Adrenal gland (tissue), 19 donors: ENCODE measurements at regions of chr4 and their contacts with region 1.

Region 1: DNA sequence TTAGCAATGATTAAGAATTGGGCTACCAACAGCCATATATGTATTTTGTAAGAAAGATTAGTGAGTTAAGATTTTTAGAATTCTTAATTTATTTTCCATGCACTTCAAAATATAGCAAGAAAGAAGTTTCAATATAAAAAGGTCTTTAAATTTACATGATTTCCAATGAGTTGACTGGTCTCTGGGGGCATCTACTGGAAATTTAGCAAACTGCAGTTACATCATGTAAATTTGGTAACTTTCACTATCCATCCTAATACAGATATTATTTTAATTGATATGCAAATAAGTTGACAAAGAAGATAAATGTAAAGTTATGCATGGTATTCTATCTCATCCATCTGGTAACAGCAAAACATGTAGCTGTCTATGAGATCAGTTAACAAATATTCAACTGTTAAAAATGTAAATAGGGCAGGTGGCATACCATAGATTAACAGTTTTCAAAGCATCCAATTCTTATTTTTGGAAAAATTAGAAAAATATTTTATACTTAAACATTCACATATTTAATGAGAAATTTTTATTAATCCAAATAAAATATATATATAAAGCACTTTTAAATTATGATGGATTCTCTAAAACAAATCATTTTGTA is 29.1 kb downstream of the TTC29 start:
- DNase-seq: peak in 3 of 7 donors; percentile 28 to 39 (median 30)
- H3K4me3 ChIP-seq: no peak overlapping the region
- H3K27ac ChIP-seq: no peak overlapping the region
- H3K4me1 ChIP-seq: no peaks in the 10 kb centered on the region
- H3K27me3 ChIP-seq: peaks cover 43% of the 10 kb centered on the region
- CTCF ChIP-seq: peak; percentile 60 to 86 (median 76)
- POLR2A ChIP-seq: no peak

Region 2: GRCh38 chr4:145956288-145956890 is 960.2 kb before region 1 on chr4:
- intact Hi-C with region 1: loop called in 1 of 2 experiments (anchors 10 kb)
- DNase-seq: peak; percentile 27 to 65 (median 39)
- H3K4me3 ChIP-seq: no peak overlapping the region
- H3K27ac ChIP-seq: no peak overlapping the region
- H3K4me1 ChIP-seq: peaks cover 0 to 3% of the 10 kb centered on the region in 2 donors
- H3K27me3 ChIP-seq: no peaks in the 10 kb centered on the region
- CTCF ChIP-seq: peak; percentile 52 to 70 (median 62)
- POLR2A ChIP-seq: no peak

Region 3: DNA sequence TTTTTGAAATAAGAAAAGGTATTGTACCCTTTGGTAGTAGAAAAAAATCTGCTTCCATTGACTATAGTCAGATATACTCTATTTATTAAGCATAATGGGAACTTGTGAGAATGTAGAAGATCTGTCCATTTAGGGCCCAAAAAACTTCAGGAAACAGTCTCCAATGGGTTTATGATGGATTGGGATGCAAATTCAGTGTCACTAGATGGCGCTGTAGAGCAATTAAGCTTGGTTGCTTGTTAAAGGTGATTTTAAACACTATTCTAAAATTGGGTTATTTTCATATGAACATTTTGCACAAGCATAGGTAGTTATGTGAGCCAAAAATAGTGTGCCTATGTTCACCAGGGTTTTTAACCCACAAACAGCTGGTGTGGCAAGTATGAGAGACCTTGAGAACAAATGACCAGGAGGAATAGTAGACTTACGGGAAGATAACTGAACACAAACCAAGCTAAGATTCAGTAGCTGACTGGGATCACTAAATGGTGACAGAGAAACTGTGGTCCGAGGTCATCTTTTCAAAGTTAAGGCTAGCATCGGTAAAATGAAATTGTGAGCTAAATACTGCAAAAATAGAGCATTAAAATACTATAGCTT is 821.4 kb before region 1 on chr4:
- intact Hi-C with region 1: loop called in 1 of 2 experiments (anchors 10 kb)
- DNase-seq: peak in 4 of 7 donors; percentile 27 to 64 (median 48)
- H3K4me3 ChIP-seq: no peak overlapping the region
- H3K27ac ChIP-seq: no peak overlapping the region
- H3K4me1 ChIP-seq: no peaks in the 10 kb centered on the region
- H3K27me3 ChIP-seq: no peaks in the 10 kb centered on the region
- CTCF ChIP-seq: peak in 5 of 6 experiments; percentile 54 to 75 (median 64)
- POLR2A ChIP-seq: no peak

Region 4: DNA sequence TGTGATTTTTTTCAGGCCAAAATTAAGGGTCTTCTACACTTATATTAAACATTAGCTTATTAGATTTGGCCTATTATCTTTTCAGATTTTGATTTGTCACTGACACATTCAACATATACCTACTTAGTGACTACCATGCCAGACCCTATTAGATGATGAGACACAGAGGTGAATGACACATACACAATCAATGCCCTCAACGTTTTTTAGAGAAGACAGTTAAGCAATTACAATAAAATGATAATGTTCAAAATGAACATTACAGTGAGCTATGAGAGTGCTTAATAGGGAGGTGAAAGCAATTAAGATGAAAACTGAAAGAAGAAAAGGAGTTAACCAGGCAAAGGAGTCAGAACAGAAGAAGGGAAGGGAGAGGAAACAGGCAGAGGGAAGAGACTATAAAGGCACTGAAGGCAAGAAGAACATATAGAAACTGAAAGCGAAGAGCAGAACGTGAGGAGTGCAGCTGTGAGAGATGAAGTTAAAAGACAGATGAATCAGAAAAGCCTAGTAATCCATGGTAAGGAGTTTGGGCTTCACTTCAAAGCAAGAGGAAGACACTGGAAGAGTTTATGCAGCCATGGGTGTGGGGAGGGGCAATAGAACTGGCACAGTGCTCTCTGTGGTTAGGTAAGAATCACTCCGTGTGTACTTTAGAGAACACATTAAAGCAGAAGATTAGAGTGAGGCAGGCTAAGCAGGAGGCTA is 583.2 kb before region 1 on chr4:
- intact Hi-C with region 1: loop called in 1 of 2 experiments (anchors 10 kb)
- DNase-seq: no peak
- H3K4me3 ChIP-seq: no peak overlapping the region
- H3K27ac ChIP-seq: no peak overlapping the region
- H3K4me1 ChIP-seq: peaks cover 0 to 21% of the 10 kb centered on the region in 2 donors
- H3K27me3 ChIP-seq: no peaks in the 10 kb centered on the region
- CTCF ChIP-seq: no peak
- POLR2A ChIP-seq: no peak

Region 5: DNA sequence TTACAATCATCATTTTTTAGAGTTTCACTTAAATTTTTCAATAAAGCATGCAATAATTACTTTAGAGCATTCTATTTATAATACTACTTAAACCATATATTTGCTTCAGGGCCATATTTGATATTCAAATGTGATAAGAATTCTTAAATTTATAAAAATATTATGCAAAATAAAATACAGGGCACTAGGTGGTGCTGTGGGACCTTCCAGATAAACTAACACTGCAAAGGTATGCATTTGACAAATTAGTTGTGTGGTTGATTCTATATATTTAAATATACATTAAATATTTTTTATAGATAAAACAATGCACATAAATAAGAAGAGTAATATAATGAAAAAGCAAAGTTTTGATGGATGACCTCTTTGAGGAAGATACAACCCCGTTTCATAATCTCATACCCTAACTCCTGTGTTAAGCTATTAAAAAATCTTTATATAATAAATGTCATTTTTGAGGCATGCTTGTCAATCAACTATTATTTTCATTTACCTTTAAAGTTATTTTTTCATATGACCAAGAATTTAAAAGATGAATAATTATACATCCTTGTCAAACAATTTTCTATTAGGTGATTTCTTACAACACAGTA is 573.9 kb before region 1 on chr4:
- intact Hi-C with region 1: loop called (anchors 5 to 10 kb)
- DNase-seq: peak in 5 of 7 donors; percentile 13 to 49 (median 38)
- H3K4me3 ChIP-seq: no peak overlapping the region
- H3K27ac ChIP-seq: no peak overlapping the region
- H3K4me1 ChIP-seq: peaks cover 0 to 6% of the 10 kb centered on the region in 2 donors
- H3K27me3 ChIP-seq: no peaks in the 10 kb centered on the region
- CTCF ChIP-seq: peak; percentile 27 to 74 (median 52)
- POLR2A ChIP-seq: no peak

Region 6: DNA sequence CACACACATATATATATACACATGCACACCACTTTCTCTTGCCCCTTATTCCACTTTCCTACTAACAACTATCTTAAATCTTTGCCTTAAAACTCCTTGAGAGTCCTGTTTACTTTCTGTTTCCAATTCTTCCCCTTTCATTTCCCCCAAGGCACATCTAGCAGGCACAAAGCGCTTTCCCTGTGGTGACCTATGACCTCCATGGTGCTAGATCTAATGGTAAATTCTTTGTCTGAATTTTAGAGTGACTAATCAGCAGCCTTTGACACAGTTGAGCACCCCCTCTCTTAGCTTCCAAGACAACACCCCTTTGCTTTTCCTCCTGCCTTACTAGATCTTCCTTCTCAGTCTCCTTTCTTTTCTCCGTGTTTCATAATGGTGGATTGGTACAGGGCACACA is 265.5 kb after region 1 on chr4:
- intact Hi-C with region 1: no loop called
- DNase-seq: no peak
- H3K4me3 ChIP-seq: no peak overlapping the region
- H3K27ac ChIP-seq: no peak overlapping the region
- H3K4me1 ChIP-seq: no peaks in the 10 kb centered on the region
- H3K27me3 ChIP-seq: no peaks in the 10 kb centered on the region
- CTCF ChIP-seq: no peak
- POLR2A ChIP-seq: no peak